Common myeloid progenitor, CD34-positive (primary cell): ENCODE measurements at regions of chr15 and their contacts with region 1.

Region 1: DNA sequence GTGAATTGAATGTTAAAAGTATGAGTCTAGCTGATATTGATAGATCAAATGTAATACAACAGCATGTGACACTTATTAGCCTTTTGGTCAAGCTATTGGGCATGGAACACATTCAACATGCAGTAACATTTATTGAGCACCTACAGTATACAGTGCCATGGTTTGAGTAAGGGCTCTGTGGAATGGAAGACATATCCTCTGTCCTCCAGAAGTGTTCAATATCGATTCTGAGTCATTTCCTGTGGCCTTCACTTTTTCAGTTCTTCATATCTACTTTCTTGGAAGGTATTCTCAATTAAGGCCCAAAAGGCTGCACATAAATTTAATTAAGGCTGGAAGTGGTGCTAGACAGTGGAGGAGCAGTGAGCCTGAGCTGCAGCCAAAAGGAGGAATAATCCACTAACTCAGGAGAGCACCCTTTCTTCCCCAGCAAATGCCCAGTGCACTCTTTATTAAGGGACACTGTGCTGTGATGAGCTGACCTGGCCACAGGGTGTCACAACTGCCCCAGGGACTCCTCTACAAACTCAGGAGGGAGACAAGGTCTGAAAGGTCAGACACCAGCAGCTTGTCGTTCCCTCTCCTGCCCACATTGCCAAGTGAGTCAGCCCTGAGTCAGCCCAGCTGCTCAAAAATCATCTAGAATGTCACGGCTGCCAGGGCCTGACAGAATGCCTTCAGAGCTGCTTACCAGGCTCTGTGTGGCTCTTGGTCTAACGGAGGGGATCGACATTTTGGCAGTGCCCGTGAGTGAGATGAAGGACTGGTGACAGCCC is 544.8 kb downstream of the AGBL1 start:
- DNase-seq: peak; percentile 36 to 42 (median 39)
- H3K4me3 ChIP-seq: no peak overlapping the region
- H3K27ac ChIP-seq: no peak overlapping the region
- H3K4me1 ChIP-seq: no peaks in the 10 kb centered on the region
- H3K27me3 ChIP-seq: peaks cover 0 to 7% (median 2%) of the 10 kb centered on the region in 5 experiments

Region 2: GRCh38 chr15:86700864-86701619 is 76.6 kb after region 1 on chr15:
- CTCF ChIA-PET with region 1: no interaction called
- POLR2A ChIA-PET with region 1: no interaction called
- DNase-seq: no peak
- H3K4me3 ChIP-seq: no peak overlapping the region
- H3K27ac ChIP-seq: no peak overlapping the region
- H3K4me1 ChIP-seq: no peaks in the 10 kb centered on the region
- H3K27me3 ChIP-seq: no peaks in the 10 kb centered on the region

Region 3: GRCh38 chr15:86743283-86743903 is 118.9 kb after region 1 on chr15:
- CTCF ChIA-PET with region 1: interaction called, 10 read pairs
- POLR2A ChIA-PET with region 1: no interaction called
- DNase-seq: peak; percentile 23 to 47 (median 41)
- H3K4me3 ChIP-seq: no peak overlapping the region
- H3K27ac ChIP-seq: no peak overlapping the region
- H3K4me1 ChIP-seq: no peaks in the 10 kb centered on the region
- H3K27me3 ChIP-seq: peaks cover 0 to 4% (median 0%) of the 10 kb centered on the region in 5 experiments